WTC11 (cell line): ENCODE measurements at regions of chr6 and their contacts with region 1.

Region 1: GRCh38 chr6:89080542-89081422 is at the start of gene PNRC1:
- DNase-seq: peak; percentile 100
- ATAC-seq: peak; percentile 85
- H3K4me3 Mint-ChIP-seq: peak within 1 kb of the TSS; percentile 93
- H3K27ac Mint-ChIP-seq: peak within 1 kb of the TSS; percentile 99
- H3K4me1 Mint-ChIP-seq: peaks cover 47% of the 10 kb centered on the region
- H3K27me3 Mint-ChIP-seq: peaks cover 7% of the 10 kb centered on the region
- CTCF ChIP-seq: no peak
- total RNA-seq, gene PNRC1: 39.0 to 49.3 TPM (median 48.4 TPM) in 3 replicates

Region 2: GRCh38 chr6:89069536-89070163 is 11.1 kb before region 1 on chr6:
- CTCF ChIA-PET with region 1: interaction called, 4 read pairs
- POLR2A ChIA-PET with region 1: interaction called, 10 read pairs
- DNase-seq: no peak
- ATAC-seq: no peak
- H3K4me3 Mint-ChIP-seq: no peak overlapping the region
- H3K27ac Mint-ChIP-seq: no peak overlapping the region
- H3K4me1 Mint-ChIP-seq: no peaks in the 10 kb centered on the region
- H3K27me3 Mint-ChIP-seq: peaks cover 10% of the 10 kb centered on the region
- CTCF ChIP-seq: no peak

Region 3: DNA sequence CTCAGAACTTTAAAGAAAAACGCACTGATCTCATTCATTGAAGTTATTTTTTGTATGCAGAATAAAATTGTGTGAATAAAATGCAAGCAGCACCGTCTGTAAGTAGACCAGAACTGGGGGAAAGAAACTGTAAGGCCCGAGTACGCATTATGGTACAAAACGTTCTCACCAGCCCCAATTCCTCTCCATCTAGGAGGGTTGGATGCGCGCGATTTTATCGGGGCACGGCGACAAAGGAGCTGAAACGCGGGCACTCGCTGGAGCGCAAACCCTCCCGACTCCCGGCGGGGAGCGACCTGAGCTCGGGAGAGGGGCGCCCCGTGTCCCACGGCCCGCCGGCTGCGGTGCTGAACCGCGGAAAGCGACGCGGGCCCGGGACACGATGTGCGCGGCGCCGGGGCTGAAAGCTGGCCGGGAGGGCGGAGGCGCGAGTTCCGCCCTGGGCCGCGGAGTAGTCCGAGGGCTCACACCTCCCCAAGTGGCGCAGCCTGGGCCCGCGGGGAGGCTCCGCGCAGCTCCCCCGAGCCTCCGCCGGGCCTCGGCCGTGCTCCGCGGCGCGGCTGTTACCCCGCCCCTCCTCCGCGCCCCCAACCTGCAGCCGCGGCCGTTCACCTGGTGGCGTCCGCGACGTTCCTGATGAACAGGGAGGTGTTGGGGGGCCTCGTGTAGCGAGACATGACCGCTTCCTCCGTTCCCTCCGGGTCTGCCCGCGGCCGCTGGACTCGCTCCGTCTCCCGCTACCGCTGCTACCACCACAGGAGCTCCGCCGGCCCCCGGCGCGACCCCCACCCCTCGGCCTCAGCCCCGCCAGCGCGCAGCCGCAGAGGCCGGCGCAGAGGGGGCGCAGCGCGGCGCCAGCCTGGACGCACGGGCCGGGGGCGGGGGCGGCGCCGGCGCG is 36.7 kb after region 1 on chr6 and contains the start of gene SRSF12:
- CTCF ChIA-PET with region 1: interaction called, 4 read pairs
- POLR2A ChIA-PET with region 1: interaction called, 23 read pairs
- DNase-seq: peak; percentile 62
- ATAC-seq: peak; percentile 85
- H3K4me3 Mint-ChIP-seq: peak within 1 kb of the TSS; percentile 74
- H3K27ac Mint-ChIP-seq: no peak within 1 kb of the TSS
- H3K4me1 Mint-ChIP-seq: peaks cover 9% of the 10 kb centered on the region
- H3K27me3 Mint-ChIP-seq: peaks cover 49% of the 10 kb centered on the region
- CTCF ChIP-seq: no peak
- total RNA-seq, gene SRSF12: 3.8 to 4.0 TPM (median 3.8 TPM) in 3 replicates

Region 4: GRCh38 chr6:89145787-89146646 is 65.2 kb after region 1 on chr6 and contains the start of gene PM20D2:
- CTCF ChIA-PET with region 1: interaction called, 3 read pairs
- POLR2A ChIA-PET with region 1: interaction called, 11 read pairs
- DNase-seq: peak; percentile 58
- ATAC-seq: peak; percentile 84
- H3K4me3 Mint-ChIP-seq: peak within 1 kb of the TSS; percentile 67
- H3K27ac Mint-ChIP-seq: no peak within 1 kb of the TSS
- H3K4me1 Mint-ChIP-seq: peaks cover 9% of the 10 kb centered on the region
- H3K27me3 Mint-ChIP-seq: peaks cover 76% of the 10 kb centered on the region
- CTCF ChIP-seq: no peak
- total RNA-seq, gene PM20D2: 4.8 to 5.1 TPM (median 4.9 TPM) in 3 replicates

Region 5: DNA sequence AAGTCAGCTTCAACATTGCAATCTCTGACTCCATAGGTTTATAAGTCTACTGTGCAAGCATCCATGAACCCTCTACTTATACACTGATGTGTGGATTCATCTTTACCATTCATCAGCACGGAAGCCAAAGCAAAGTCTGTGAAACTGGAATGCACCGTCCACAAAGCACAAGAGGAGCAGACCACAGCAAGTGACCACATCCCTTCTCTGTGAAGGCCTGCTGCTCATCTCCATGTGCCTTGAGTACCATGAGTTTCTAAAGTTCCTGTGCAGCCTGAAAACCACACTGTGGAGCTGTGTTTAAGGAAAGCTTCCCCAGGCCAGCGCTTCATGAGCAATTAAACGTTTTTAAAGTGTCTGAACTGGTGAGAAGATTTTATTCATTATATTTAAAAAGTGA is 116.4 kb after region 1 on chr6:
- CTCF ChIA-PET with region 1: no interaction called
- POLR2A ChIA-PET with region 1: no interaction called
- DNase-seq: no peak
- ATAC-seq: no peak
- H3K4me3 Mint-ChIP-seq: no peak overlapping the region
- H3K27ac Mint-ChIP-seq: no peak overlapping the region
- H3K4me1 Mint-ChIP-seq: peaks cover 8% of the 10 kb centered on the region
- H3K27me3 Mint-ChIP-seq: peaks cover 6% of the 10 kb centered on the region; the same call in 1 of the 2 replicates
- CTCF ChIP-seq: no peak